ENCODE measurements at regions of chr5 and their contacts with region 1.

Region 1: GRCh38 chr5:154940772-154941620 is at the start of gene MRPL22:
- DNase-seq: peak; percentile 89
- ATAC-seq: peak; percentile 48
- H3K4me3 ChIP-seq: peak within 1 kb of the TSS; percentile 87
- H3K27ac ChIP-seq: 0 out of 2 replicates have a peak within 1 kb of the TSS, but pooled peaks have one; percentile 21
- H3K4me1 ChIP-seq: peaks cover 18% of the 10 kb centered on the region
- H3K27me3 ChIP-seq: no peaks in the 10 kb centered on the region
- CTCF ChIP-seq: no peak
- total RNA-seq, gene MRPL22: 22.3 and 27.2 TPM in 2 replicates

Region 2: GRCh38 chr5:154647114-154647760 is 293.8 kb before region 1 on chr5:
- CTCF ChIA-PET with region 1: no interaction called
- POLR2A ChIA-PET with region 1: no interaction called
- intact Hi-C with region 1: loop called (anchors 10 kb)
- DNase-seq: peak; percentile 38
- ATAC-seq: peak; percentile 70
- H3K4me3 ChIP-seq: peak overlapping the region; percentile 46
- H3K27ac ChIP-seq: no peak overlapping the region
- H3K4me1 ChIP-seq: 0 out of 2 replicates have a peak, but pooled peaks cover 4% of the 10 kb centered on the region
- H3K27me3 ChIP-seq: no peaks in the 10 kb centered on the region
- CTCF ChIP-seq: no peak

Region 3: GRCh38 chr5:154754460-154755360 is 186.3 kb before region 1 on chr5:
- CTCF ChIA-PET with region 1: no interaction called
- POLR2A ChIA-PET with region 1: no interaction called
- intact Hi-C with region 1: loop called (anchors 10 kb)
- DNase-seq: peak; percentile 96
- ATAC-seq: peak; percentile 86
- H3K4me3 ChIP-seq: peak overlapping the region; percentile 96
- H3K27ac ChIP-seq: peak overlapping the region; percentile 84
- H3K4me1 ChIP-seq: peaks cover 27% of the 10 kb centered on the region
- H3K27me3 ChIP-seq: no peaks in the 10 kb centered on the region
- CTCF ChIP-seq: peak; percentile 27; the same call in 1 of the 2 replicates

Region 4: GRCh38 chr5:154857530-154858296 is 83.3 kb before region 1 on chr5:
- CTCF ChIA-PET with region 1: no interaction called
- POLR2A ChIA-PET with region 1: no interaction called
- intact Hi-C with region 1: loop called (anchors 5 kb)
- DNase-seq: peak; percentile 88
- ATAC-seq: peak; percentile 86
- H3K4me3 ChIP-seq: peak overlapping the region; percentile 93
- H3K27ac ChIP-seq: peak overlapping the region; percentile 88
- H3K4me1 ChIP-seq: peaks cover 11% of the 10 kb centered on the region; the same call in 1 of the 2 replicates
- H3K27me3 ChIP-seq: no peaks in the 10 kb centered on the region
- CTCF ChIP-seq: no peak

Region 5: GRCh38 chr5:154967421-154968024 is 26.5 kb after region 1 on chr5:
- CTCF ChIA-PET with region 1: interaction called, 4 read pairs
- POLR2A ChIA-PET with region 1: no interaction called
- intact Hi-C with region 1: loop called (anchors 2 kb)
- DNase-seq: peak; percentile 41
- ATAC-seq: no peak
- H3K4me3 ChIP-seq: no peak overlapping the region
- H3K27ac ChIP-seq: no peak overlapping the region
- H3K4me1 ChIP-seq: peaks cover 13% of the 10 kb centered on the region; the same call in 1 of the 2 replicates
- H3K27me3 ChIP-seq: no peaks in the 10 kb centered on the region
- CTCF ChIP-seq: peak; percentile 69

Region 6: DNA sequence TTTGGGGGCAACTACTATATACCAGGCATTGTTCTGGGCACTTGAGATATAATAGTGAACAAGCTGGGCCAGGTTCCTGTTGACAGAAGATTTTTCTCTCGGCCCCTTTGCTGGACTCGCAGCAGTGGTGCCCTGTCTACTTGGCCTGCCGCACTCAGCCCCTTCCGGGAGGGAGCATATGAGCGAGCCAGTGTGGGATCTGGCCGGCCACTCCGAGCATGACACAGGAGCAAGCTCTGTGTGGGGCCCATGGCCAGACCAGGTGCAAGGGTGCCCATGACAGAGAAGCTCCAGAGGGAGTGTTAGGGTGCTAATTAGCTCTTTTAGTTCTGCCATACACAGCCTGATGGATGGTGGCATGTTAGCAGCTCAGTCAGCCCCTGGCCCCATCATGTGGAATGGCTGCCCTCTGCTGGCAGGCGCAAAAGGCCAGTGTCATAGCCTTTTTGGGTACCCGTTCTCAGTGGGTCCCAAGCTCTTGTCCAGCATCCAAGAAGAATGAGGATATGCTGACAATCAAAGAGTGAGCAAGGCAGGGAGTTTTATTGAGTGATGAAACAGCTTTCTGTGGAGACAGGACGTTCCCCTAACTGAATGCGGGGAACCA is 63.2 kb after region 1 on chr5:
- CTCF ChIA-PET with region 1: no interaction called
- POLR2A ChIA-PET with region 1: no interaction called
- intact Hi-C with region 1: loop called (anchors 1 kb)
- DNase-seq: peak; percentile 56
- ATAC-seq: peak; percentile 84
- H3K4me3 ChIP-seq: no peak overlapping the region
- H3K27ac ChIP-seq: no peak overlapping the region
- H3K4me1 ChIP-seq: peaks cover 4% of the 10 kb centered on the region
- H3K27me3 ChIP-seq: no peaks in the 10 kb centered on the region
- CTCF ChIP-seq: peak; percentile 72

Region 7: DNA sequence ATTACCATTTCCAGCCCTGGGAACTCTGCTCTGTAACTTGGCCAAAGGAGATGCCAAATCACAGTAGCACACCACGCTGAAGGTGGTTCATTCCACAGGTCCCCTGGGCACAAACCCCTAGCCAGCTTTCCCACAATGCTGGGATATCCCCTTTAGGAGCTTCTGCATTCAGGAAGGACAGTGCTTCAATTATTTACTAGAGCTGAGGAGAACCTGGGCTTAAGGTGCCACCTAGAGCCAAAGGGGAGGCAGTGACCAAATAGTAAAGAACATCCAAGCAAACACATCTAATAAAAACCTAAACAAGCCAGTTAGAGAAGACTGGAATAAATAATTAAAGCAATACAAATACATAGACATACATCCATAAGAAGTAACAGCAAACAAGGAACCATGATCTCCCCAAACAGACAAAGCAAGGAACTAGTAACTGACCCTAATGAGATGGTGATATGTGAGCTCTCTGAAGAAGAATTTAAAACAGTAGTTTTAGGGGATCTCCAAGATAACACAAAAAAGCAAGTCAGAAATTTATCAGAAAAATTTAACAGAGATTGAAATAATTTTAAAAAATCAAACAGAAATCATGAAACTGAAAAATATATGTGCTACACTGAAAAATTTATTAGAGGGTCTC is 87.1 kb after region 1 on chr5:
- CTCF ChIA-PET with region 1: no interaction called
- POLR2A ChIA-PET with region 1: no interaction called
- intact Hi-C with region 1: loop called (anchors 1 kb)
- DNase-seq: peak; percentile 15
- ATAC-seq: peak; percentile 70
- H3K4me3 ChIP-seq: no peak overlapping the region
- H3K27ac ChIP-seq: no peak overlapping the region
- H3K4me1 ChIP-seq: no peaks in the 10 kb centered on the region
- H3K27me3 ChIP-seq: no peaks in the 10 kb centered on the region
- CTCF ChIP-seq: peak; percentile 49; the same call in 1 of the 2 replicates

Region 8: DNA sequence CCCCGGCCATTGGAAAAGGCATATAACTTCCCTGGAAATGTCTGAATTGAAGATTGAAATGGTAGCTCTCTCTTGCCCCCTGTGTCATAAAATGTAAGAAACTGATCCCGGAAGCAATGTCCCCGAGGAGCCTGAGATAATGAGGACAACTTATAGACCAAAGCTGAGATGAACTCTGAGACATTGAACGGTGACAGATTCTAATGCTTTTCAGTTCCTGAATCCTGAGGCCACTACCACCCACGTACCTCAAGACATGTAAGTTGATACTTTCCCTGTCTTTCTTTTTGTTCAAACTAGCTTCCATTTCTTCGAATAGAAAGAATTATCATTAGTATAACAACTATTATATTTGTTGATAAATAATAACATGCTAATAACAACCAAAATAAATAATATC is 123.6 kb after region 1 on chr5:
- CTCF ChIA-PET with region 1: no interaction called
- POLR2A ChIA-PET with region 1: no interaction called
- intact Hi-C with region 1: no loop called
- DNase-seq: no peak
- ATAC-seq: no peak
- H3K4me3 ChIP-seq: no peak overlapping the region
- H3K27ac ChIP-seq: no peak overlapping the region
- H3K4me1 ChIP-seq: no peaks in the 10 kb centered on the region
- H3K27me3 ChIP-seq: peaks cover 5% of the 10 kb centered on the region
- CTCF ChIP-seq: no peak

Measured in PC-3 (cell line).